Right ventricle myocardium inferior (tissue), 1 donor: ENCODE measurements at regions of chr1 and their contacts with region 1.

Region 1: DNA sequence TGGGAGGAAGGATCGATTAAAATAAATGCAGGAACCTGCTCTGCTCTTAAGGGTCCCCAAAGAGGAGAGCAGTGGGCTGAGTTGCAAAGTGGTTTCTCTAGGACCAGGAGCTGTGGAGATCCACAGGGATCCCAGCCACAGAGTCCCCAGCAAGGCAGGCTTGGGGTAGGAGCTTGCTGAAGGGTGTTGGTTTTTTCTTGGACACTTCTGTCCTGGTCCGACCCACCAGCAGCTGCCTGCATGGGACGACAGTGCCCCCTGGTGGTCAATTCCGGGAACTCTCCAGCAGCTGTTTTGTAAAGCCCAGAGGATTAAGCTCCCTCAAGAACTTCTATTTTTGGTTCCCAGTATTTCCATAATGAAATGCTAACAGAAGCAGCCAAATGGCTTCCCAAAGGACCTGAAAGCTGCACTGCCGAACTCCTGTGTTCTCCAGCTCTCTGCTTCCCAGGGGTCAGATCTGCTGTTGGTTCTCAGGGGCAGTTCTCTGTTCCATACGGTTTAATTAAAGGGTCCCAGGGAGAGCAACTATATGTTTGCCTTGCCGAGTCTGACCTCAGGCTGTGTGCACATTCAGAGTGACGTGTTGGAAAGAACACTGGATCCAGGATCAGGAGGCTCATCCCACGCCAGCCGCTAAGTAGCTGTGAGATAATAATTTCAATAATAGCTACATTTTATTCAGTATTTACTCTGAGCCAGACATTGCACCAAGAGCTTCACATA is 23.2 kb downstream of the NENF start:
- DNase-seq: peak; percentile 87
- ATAC-seq: peak; percentile 79

Region 2: GRCh38 chr1:212035123-212035834 is 420.7 kb before region 1 on chr1 and contains the starts of genes DTL and INTS7:
- intact Hi-C with region 1: loop called (anchors 10 kb)
- DNase-seq: peak; percentile 99
- ATAC-seq: peak; percentile 98
- total RNA-seq, gene DTL: 1.3 TPM
- total RNA-seq, gene INTS7: 9.6 TPM

Region 3: DNA sequence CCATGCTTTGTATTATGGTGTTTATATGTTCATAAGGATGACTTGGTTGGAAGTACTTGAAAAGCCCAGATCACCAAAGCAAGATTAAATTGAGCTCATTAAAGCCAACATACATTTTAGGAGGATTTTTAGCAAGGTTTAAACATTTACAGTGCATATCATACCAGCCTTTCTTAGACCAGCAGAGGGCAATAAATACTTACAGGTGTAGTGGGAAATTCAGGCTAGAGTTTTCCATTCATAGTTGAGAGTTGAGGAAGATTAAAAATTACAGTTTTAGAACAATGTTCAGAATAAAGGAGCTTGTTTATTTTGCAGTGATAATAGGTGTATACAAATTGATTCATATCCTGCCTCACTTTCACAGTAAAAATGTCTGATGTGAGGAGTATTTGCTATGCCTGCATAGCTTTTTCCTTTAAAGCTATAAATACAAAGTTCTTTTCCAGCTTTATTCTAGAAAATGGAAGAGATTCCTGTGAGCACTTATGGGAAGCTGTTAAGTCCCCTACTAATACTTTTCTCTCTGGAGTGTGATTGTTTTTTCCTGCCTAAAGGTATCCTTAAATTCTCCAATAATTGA is 385.2 kb before region 1 on chr1:
- intact Hi-C with region 1: loop called (anchors 2 kb)
- DNase-seq: no peak
- ATAC-seq: peak; percentile 54

Region 4: GRCh38 chr1:212368073-212368484 is 87.9 kb before region 1 on chr1:
- intact Hi-C with region 1: loop called (anchors 5 kb)
- DNase-seq: no peak
- ATAC-seq: peak; percentile 76